Heart left ventricle (tissue), 16 donors: ENCODE measurements at regions of chr17 and their contacts with region 1.

Region 1: GRCh38 chr17:77127735-77128361 is 12.9 kb upstream of the SEC14L1 start:
- DNase-seq: peak; percentile 80 to 86 (median 82)
- ATAC-seq: peak; percentile 65 to 83 (median 78)
- H3K4me3 ChIP-seq: peak overlapping the region in 9 of 12 donors; percentile 16 to 45 (median 39)
- H3K27ac ChIP-seq: peak overlapping the region; percentile 76 to 96 (median 87)
- H3K4me1 ChIP-seq: peaks cover 0 to 88% (median 40%) of the 10 kb centered on the region in 12 donors
- H3K27me3 ChIP-seq: no peaks in the 10 kb centered on the region
- CTCF ChIP-seq: no peak
- POLR2A ChIP-seq: peak in 1 of 2 donors; percentile 84

Region 2: GRCh38 chr17:77109764-77110359 is 18.0 kb before region 1 on chr17:
- intact Hi-C with region 1: loop called in 2 of 10 experiments (anchors 2 kb)
- DNase-seq: peak in 1 of 5 donors; percentile 54
- ATAC-seq: peak; percentile 75 to 91 (median 85)
- H3K4me3 ChIP-seq: no peak overlapping the region
- H3K27ac ChIP-seq: peak overlapping the region; percentile 79 to 93 (median 86)
- H3K4me1 ChIP-seq: peaks cover 0 to 53% (median 24%) of the 10 kb centered on the region in 12 donors
- H3K27me3 ChIP-seq: no peaks in the 10 kb centered on the region
- CTCF ChIP-seq: peak in 3 of 12 donors; percentile 12 to 21 (median 17)
- POLR2A ChIP-seq: peak in 1 of 2 donors; percentile 32